Heart left ventricle (tissue), 16 donors: ENCODE measurements at regions of chr13 and their contacts with region 1.

Region 1: GRCh38 chr13:80342471-80343380 is 1.8 kb upstream of the SPRY2 start:
- DNase-seq: peak; percentile 85 to 95 (median 90)
- ATAC-seq: peak; percentile 24 to 59 (median 51)
- H3K4me3 ChIP-seq: peak overlapping the region; percentile 69 to 97 (median 94)
- H3K27ac ChIP-seq: peak overlapping the region; percentile 89 to 100 (median 98)
- H3K4me1 ChIP-seq: peaks cover 0 to 30% (median 14%) of the 10 kb centered on the region in 12 donors
- H3K27me3 ChIP-seq: no peaks in the 10 kb centered on the region
- CTCF ChIP-seq: peak; percentile 96 to 100 (median 99)
- POLR2A ChIP-seq: peak in 1 of 2 donors; percentile 51

Region 2: GRCh38 chr13:79541426-79542049 is 801.2 kb before region 1 on chr13:
- intact Hi-C with region 1: loop called in 1 of 10 experiments (anchors 10 kb)
- DNase-seq: no peak
- ATAC-seq: no peak
- H3K4me3 ChIP-seq: no peak overlapping the region
- H3K27ac ChIP-seq: no peak overlapping the region
- H3K4me1 ChIP-seq: peaks cover 0 to 7% (median 0%) of the 10 kb centered on the region in 12 donors
- H3K27me3 ChIP-seq: no peaks in the 10 kb centered on the region
- CTCF ChIP-seq: peak; percentile 78 to 93 (median 84)
- POLR2A ChIP-seq: no peak

Region 3: GRCh38 chr13:79679334-79679733 is 663.4 kb before region 1 on chr13:
- intact Hi-C with region 1: loop called in 4 of 10 experiments (anchors 5 to 10 kb)
- DNase-seq: peak; percentile 58 to 75 (median 69)
- ATAC-seq: peak in 3 of 4 donors; percentile 56 to 80 (median 72)
- H3K4me3 ChIP-seq: no peak overlapping the region
- H3K27ac ChIP-seq: no peak overlapping the region
- H3K4me1 ChIP-seq: peaks cover 0 to 8% (median 1%) of the 10 kb centered on the region in 12 donors
- H3K27me3 ChIP-seq: no peaks in the 10 kb centered on the region
- CTCF ChIP-seq: peak; percentile 67 to 84 (median 78)
- POLR2A ChIP-seq: no peak

Region 4: DNA sequence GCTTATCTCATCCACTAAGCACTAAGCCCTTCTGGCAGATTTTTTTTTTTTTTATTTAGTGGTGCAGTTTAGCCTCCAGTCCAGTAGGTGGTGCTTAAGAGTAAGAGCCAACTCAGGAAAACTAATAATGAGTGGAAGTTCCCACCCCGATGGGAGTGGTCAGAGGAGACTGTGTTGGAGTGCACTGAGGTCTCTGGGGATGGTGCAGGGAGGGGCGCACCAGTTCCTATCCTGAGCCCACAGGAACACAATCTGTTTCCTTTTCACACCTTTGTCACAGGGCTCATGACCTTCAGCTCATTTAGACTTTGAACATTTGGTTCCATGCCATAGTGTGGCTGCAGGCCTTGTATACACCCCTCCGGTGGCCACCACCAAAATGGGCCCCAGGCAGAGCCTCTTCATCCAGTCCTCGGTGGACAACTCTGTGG is 369.2 kb before region 1 on chr13:
- intact Hi-C with region 1: loop called in 2 of 10 experiments (anchors 1 to 10 kb)
- DNase-seq: peak; percentile 52 to 67 (median 60)
- ATAC-seq: peak; percentile 78 to 98 (median 90)
- H3K4me3 ChIP-seq: no peak overlapping the region
- H3K27ac ChIP-seq: no peak overlapping the region
- H3K4me1 ChIP-seq: peaks cover 0 to 7% (median 0%) of the 10 kb centered on the region in 12 donors
- H3K27me3 ChIP-seq: no peaks in the 10 kb centered on the region
- CTCF ChIP-seq: peak; percentile 24 to 63 (median 53)
- POLR2A ChIP-seq: no peak

Region 5: GRCh38 chr13:80132741-80133601 is 209.8 kb before region 1 on chr13:
- intact Hi-C with region 1: loop called (anchors 1 to 5 kb)
- DNase-seq: peak in 4 of 5 donors; percentile 69 to 85 (median 74)
- ATAC-seq: peak; percentile 95 to 97 (median 96)
- H3K4me3 ChIP-seq: peak overlapping the region in 11 of 12 donors; percentile 5 to 51 (median 36)
- H3K27ac ChIP-seq: peak overlapping the region; percentile 80 to 95 (median 88)
- H3K4me1 ChIP-seq: peaks cover 5 to 44% (median 29%) of the 10 kb centered on the region in 12 donors
- H3K27me3 ChIP-seq: no peaks in the 10 kb centered on the region
- CTCF ChIP-seq: peak in 3 of 12 donors; percentile 13 to 30 (median 26)
- POLR2A ChIP-seq: peak in 1 of 2 donors; percentile 55

Region 6: DNA sequence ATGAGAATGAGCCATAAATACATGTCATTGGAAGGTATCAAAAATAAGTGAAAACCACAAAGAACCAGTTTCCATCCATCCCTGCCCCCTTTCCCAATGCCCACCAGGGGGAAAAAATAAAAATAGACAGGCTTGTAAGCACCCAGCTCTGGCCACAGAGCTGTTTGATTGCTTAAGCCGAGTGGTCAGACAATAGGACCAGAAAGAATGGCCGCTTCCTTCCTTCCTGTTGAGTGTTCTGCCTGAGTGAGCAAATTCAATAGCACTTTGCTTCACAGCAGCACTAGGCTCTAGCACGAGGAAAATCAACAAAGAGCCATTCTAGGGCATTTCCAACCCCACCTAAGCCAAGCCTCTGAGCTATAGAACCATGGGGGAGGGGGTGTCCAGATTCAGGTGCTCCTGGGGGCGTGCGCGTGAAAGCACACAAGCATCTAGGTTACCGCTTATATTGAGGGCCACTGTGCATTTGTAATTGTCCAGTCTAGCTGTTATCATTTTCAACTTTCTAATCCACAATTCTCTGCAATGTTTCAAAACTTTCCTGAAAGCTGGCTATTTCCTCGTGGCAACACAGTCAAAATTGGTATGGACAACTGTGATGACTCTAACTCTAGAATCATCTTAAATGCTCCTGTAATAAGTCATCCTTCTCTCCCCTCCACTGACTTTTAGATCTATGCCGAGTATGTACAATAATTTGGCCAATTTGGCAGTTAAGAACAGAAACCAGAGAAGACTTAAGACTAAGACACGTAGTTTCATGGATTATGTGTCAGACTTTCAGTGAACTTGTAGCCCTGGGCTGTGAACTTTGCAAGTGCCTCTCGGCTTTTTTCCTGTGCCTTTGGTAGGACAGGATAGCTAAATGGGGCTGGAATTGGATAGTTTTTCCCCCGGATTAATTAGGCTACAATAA is 66.1 kb before region 1 on chr13:
- intact Hi-C with region 1: loop called in 2 of 10 experiments (anchors 2 kb)
- DNase-seq: peak in 1 of 5 donors; percentile 27
- ATAC-seq: peak in 3 of 4 donors; percentile 75 to 95 (median 84)
- H3K4me3 ChIP-seq: no peak overlapping the region
- H3K27ac ChIP-seq: peak overlapping the region in 7 of 12 donors; percentile 9 to 60 (median 21)
- H3K4me1 ChIP-seq: peaks cover 0 to 23% (median 9%) of the 10 kb centered on the region in 12 donors
- H3K27me3 ChIP-seq: no peaks in the 10 kb centered on the region
- CTCF ChIP-seq: peak in 2 of 12 donors; percentile 7 to 25
- POLR2A ChIP-seq: no peak

Region 7: GRCh38 chr13:80551650-80552497 is 209.1 kb after region 1 on chr13:
- intact Hi-C with region 1: no loop called
- DNase-seq: no peak
- ATAC-seq: no peak
- H3K4me3 ChIP-seq: no peak overlapping the region
- H3K27ac ChIP-seq: peak overlapping the region in 11 of 12 donors; percentile 7 to 67 (median 54)
- H3K4me1 ChIP-seq: peaks cover 0 to 42% (median 6%) of the 10 kb centered on the region in 12 donors
- H3K27me3 ChIP-seq: no peaks in the 10 kb centered on the region
- CTCF ChIP-seq: no peak
- POLR2A ChIP-seq: no peak

Region 8: GRCh38 chr13:81017513-81018152 is 674.9 kb after region 1 on chr13:
- intact Hi-C with region 1: loop called in 9 of 10 experiments (anchors 2 to 10 kb)
- DNase-seq: no peak
- ATAC-seq: peak in 2 of 4 donors; percentile 61 to 69
- H3K4me3 ChIP-seq: peak overlapping the region in 3 of 12 donors; percentile 2 to 36 (median 18)
- H3K27ac ChIP-seq: peak overlapping the region in 1 of 12 donors; percentile 2
- H3K4me1 ChIP-seq: peaks cover 0 to 4% (median 0%) of the 10 kb centered on the region in 12 donors
- H3K27me3 ChIP-seq: no peaks in the 10 kb centered on the region
- CTCF ChIP-seq: peak; percentile 48 to 78 (median 61)
- POLR2A ChIP-seq: no peak